Common myeloid progenitor, CD34-positive (primary cell): ENCODE measurements at regions of chr12 and their contacts with region 1.

Region 1: GRCh38 chr12:120228291-120229070 is 27.6 kb upstream of the RPLP0 start:
- DNase-seq: peak; percentile 81 to 91 (median 87)
- H3K4me3 ChIP-seq: peak overlapping the region in 4 of 7 experiments; percentile 25 to 42 (median 34)
- H3K27ac ChIP-seq: peak overlapping the region in 1 of 2 experiments; percentile 78
- H3K4me1 ChIP-seq: peaks cover 30 to 98% (median 88%) of the 10 kb centered on the region in 4 experiments
- H3K27me3 ChIP-seq: no peaks in the 10 kb centered on the region

Region 2: DNA sequence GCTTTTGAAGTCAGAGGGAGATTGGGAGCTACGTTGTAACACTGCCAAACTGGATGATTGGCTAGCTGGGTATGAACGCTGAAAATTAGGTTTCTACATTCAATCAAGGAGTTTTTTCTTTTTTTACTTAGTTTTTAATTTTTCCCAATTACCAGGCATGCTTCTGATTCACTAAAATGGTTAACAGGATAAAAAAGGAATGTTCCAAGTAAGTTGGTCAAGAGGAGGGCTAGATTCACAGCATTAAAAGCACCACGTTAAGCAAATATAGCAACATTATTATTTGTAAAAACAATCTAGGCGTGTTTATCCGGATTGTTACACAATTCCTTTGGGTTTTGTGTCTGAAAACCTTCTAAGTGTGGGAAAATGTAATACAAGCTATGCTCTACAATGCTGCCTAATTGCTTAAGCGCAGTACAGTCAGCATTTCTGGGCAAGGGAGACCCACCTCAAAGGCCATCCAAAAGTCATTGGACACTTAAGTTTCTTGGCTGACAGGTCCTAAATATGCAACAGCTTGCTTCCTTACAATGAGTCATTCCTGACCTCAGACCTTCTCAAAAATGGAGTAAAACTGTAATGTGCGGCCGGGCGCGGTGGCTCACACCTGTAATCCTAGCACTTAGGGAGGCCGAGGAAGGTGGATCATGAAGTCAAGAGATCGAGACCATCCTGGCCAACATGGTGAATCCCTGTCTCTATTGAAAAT is 28.7 kb before region 1 on chr12:
- CTCF ChIA-PET with region 1: interaction called, 58 read pairs
- POLR2A ChIA-PET with region 1: interaction called, 12 read pairs
- DNase-seq: peak; percentile 13 to 47 (median 35)
- H3K4me3 ChIP-seq: peak overlapping the region; percentile 86 to 99 (median 96)
- H3K27ac ChIP-seq: peak overlapping the region; percentile 83 to 92
- H3K4me1 ChIP-seq: peaks cover 10 to 46% (median 33%) of the 10 kb centered on the region in 4 experiments
- H3K27me3 ChIP-seq: no peaks in the 10 kb centered on the region

Region 3: DNA sequence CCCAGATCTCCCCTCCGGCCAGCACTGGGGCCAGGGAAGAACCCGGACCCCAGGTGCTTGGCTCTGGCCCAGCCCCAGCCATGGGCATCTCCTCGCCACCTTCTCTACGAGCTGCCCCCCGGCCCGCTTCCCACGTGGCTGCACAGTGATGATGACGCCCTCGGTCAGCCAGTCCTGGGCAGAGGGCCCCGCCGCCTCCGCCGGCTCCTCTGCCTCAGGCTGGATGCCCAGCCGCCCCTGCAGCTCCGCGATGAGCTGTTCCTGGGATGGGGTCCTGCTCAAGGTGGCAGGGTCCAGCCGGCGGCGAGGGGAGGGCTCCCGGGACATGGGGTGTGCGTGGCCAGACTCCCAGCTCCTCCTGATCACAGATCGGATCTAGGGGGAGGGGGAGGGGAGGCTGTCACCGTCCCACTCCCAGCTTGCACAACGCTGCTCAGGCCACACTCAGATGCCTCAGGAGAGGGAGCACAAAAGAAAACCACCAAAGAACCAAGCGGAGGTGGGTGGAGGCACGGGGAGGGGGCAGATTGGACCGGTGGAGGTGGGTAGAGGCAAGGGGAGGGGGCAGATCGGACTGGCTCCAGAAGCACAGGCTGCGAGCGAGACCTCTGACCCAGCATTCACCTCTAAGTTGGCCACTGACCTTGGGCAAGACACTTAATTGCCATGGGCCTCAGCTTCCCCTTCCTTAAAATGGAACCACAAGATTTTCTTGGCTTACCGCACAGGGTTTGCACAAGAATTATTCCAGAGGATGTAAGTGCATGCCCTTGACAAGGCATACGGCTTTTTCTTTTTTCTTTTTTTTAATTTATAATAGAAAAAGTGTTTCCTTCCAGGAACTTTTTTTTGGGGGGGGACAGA is 11.5 kb before region 1 on chr12:
- CTCF ChIA-PET with region 1: interaction called, 23 read pairs
- POLR2A ChIA-PET with region 1: no interaction called
- DNase-seq: no peak
- H3K4me3 ChIP-seq: no peak overlapping the region
- H3K27ac ChIP-seq: no peak overlapping the region
- H3K4me1 ChIP-seq: no peaks in the 10 kb centered on the region
- H3K27me3 ChIP-seq: no peaks in the 10 kb centered on the region

Region 4: GRCh38 chr12:120265473-120266179 is 37.1 kb after region 1 on chr12 and contains the start of gene PXN:
- CTCF ChIA-PET with region 1: interaction called, 879 read pairs
- POLR2A ChIA-PET with region 1: interaction called, 21 read pairs
- DNase-seq: peak; percentile 72 to 85 (median 83)
- H3K4me3 ChIP-seq: peak within 1 kb of the TSS; percentile 67 to 86 (median 79)
- H3K27ac ChIP-seq: peak within 1 kb of the TSS in 1 of 2 experiments; percentile 61
- H3K4me1 ChIP-seq: peaks cover 13 to 60% (median 45%) of the 10 kb centered on the region in 4 experiments
- H3K27me3 ChIP-seq: no peaks in the 10 kb centered on the region

Region 5: GRCh38 chr12:120286796-120287465 is 58.5 kb after region 1 on chr12:
- CTCF ChIA-PET with region 1: interaction called, 64 read pairs
- POLR2A ChIA-PET with region 1: interaction called, 113 read pairs
- DNase-seq: no peak
- H3K4me3 ChIP-seq: no peak overlapping the region
- H3K27ac ChIP-seq: no peak overlapping the region
- H3K4me1 ChIP-seq: peaks cover 0 to 12% (median 9%) of the 10 kb centered on the region in 4 experiments
- H3K27me3 ChIP-seq: no peaks in the 10 kb centered on the region